ENCODE measurements at regions of chr2 and their contacts with region 1.

Region 1: GRCh38 chr2:206556357-206556949 is 85.8 kb upstream of the FAM237A start:
- DNase-seq: no peak
- ATAC-seq: no peak
- H3K4me3 ChIP-seq: no peak overlapping the region
- H3K27ac ChIP-seq: no peak overlapping the region
- H3K4me1 ChIP-seq: no peaks in the 10 kb centered on the region
- H3K27me3 ChIP-seq: no peaks in the 10 kb centered on the region

Region 2: GRCh38 chr2:206217743-206218142 is 338.7 kb before region 1 on chr2:
- intact Hi-C with region 1: no loop called
- DNase-seq: no peak
- ATAC-seq: no peak
- H3K4me3 ChIP-seq: no peak overlapping the region
- H3K27ac ChIP-seq: no peak overlapping the region
- H3K4me1 ChIP-seq: no peaks in the 10 kb centered on the region
- H3K27me3 ChIP-seq: peaks cover 0 to 1% of the 10 kb centered on the region in 2 donors

Region 3: DNA sequence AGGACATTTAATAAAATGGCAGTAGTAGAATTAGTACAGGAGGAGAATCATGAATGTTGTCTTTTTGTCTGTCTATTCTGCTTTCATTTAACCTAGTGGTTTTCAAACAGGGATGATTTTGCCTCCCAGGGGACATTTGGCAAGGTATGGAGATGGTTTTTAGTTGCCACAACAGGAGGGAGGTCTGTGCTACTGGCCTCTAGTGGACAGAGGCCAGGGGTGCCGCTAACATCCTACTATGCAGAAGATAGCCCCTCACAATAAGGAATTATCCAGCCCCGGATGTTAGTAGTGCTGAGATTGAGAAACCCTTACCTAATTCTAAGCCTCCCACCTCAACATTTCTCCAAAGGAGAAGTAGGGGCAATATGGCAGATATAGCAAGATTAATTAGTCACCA is 227.3 kb after region 1 on chr2:
- intact Hi-C with region 1: loop called in 1 of 2 experiments (anchors 5 kb)
- DNase-seq: no peak
- ATAC-seq: no peak
- H3K4me3 ChIP-seq: no peak overlapping the region
- H3K27ac ChIP-seq: no peak overlapping the region
- H3K4me1 ChIP-seq: no peaks in the 10 kb centered on the region
- H3K27me3 ChIP-seq: no peaks in the 10 kb centered on the region